Dorsolateral prefrontal cortex (tissue), 120 donors: ENCODE measurements at regions of chr3 and their contacts with region 1.

Region 1: GRCh38 chr3:150129166-150129565 is 158.5 kb upstream of the PFN2 start:
- DNase-seq: no peak
- H3K4me3 ChIP-seq: no peak overlapping the region
- H3K27ac ChIP-seq: no peak overlapping the region
- H3K27me3 ChIP-seq: peaks cover 0 to 6% (median 0%) of the 10 kb centered on the region in 45 donors
- CTCF ChIP-seq: no peak

Region 2: GRCh38 chr3:150170852-150171520 is 41.8 kb after region 1 on chr3:
- intact Hi-C with region 1: loop called in 1 of 2 experiments (anchors 2 kb)
- DNase-seq: peak; percentile 13 to 92 (median 87)
- H3K4me3 ChIP-seq: peak overlapping the region in 22 of 59 donors; percentile 2 to 53 (median 22)
- H3K27ac ChIP-seq: peak overlapping the region in 38 of 59 donors; percentile 2 to 86 (median 46)
- H3K27me3 ChIP-seq: no peaks in the 10 kb centered on the region
- CTCF ChIP-seq: peak in 19 of 56 donors; percentile 3 to 46 (median 24)